ENCODE measurements at regions of chr3 and their contacts with region 1.

Region 1: DNA sequence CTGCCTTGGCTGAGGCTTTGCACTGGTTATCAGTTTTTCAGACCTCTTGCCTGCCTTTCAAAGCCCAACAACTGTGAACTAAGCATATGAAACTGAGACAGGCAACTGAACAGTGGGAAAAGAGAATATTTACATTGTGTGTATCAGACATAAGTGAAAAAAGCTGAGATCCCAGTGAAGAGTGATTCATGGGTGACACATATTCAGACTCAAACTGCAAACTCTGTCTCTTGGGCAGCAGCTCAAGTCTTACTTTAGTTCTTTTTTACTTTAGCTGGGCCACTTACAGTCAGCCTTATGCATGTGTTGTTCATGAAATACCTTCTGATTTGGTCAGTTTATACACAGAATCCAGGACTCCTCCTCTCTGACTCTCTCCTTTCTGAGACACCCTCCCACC is 19.2 kb downstream of the SUCLG2 start:
- DNase-seq: peak; percentile 69
- H3K4me3 ChIP-seq: no peak overlapping the region
- CTCF ChIP-seq: no peak

Region 2: DNA sequence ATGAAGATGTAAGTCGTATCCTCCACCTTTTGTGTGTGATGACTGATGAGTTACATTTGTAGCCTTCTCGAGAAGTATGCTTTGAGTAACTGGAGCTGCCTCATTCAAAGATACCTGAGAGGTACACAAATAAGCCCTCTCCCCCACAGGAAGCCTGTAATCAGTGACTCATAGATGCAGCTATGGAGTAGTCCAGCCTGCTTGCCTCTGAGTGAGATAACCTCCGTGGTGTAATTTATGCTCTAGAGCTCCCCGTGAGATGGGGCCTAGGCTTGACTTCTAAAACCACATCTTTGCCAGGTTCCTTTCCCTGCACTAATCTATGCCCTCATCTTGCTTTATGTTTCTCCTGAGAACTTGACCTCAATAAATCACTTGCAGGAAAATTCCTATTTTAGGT is 272.6 kb before region 1 on chr3:
- CTCF ChIA-PET with region 1: no interaction called
- POLR2A ChIA-PET with region 1: no interaction called
- DNase-seq: no peak
- H3K4me3 ChIP-seq: no peak overlapping the region
- CTCF ChIP-seq: no peak

Region 3: GRCh38 chr3:67647390-67647878 is 12.2 kb after region 1 on chr3:
- CTCF ChIA-PET with region 1: interaction called, 3 read pairs
- POLR2A ChIA-PET with region 1: interaction called, 14 read pairs
- DNase-seq: peak; percentile 98
- H3K4me3 ChIP-seq: no peak overlapping the region
- CTCF ChIP-seq: no peak

Measured in AG04449 (cell line).